ENCODE measurements at regions of chr5 and their contacts with region 1.

Region 1: DNA sequence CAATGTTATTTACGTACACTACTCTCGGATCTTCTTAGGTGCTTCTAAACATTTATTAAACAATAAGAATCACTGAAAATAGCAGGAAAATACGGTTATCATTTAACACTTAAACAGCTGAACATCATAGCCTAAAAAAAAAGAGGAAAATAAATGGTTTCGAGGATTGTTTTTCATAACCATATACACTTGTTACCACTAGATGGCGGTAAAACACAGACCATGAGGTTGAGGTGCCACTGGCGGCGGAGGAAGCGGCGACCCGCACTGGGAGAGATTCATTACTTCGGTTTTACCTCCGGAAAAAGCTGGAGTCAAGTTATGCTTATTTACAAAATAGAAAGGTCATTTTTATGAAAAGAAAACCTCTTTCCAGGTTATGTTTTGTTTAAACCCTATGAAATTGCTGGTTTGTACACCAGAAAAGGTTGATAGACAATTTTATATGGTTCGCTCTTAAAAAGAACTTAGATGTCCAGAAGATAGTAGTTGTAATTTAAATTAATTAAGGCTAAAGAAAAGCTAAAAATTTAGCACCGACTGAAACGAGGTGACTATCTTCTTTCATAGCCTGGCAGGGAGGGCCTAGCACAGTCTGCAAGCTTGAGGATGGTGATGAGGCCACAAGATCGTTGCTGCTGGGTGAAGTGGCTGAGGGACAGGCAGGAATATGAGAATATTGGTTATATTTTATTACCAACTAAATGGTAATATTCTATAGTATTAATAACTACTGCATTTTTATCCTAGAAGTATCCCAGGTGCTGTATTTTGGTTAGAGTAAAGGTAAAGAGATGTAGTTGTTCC is 605.7 kb downstream of the RAB3C start:
- DNase-seq: peak; percentile 74
- H3K4me3 ChIP-seq: no peak overlapping the region
- H3K27ac ChIP-seq: peak overlapping the region; percentile 24
- H3K27me3 ChIP-seq: no peaks in the 10 kb centered on the region
- CTCF ChIP-seq: peak; percentile 62

Region 2: DNA sequence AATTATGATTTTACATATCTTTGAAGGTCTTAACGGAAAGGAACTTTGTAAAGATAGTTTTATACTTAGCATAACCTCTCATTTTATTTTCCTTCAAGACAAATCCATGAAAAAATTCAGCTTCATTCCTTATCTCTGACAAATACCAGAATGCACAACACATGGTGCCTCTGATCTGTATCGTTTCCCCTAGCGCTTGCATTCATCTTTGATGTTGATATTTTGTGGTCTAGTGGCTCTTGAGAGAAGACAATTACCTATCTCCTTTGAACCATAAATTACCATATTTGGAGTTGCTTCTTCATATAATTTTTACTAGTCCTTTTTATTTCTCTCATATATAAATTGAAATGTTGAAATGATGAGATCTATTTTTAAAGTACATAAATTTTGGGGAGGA is 153.6 kb after region 1 on chr5:
- in situ Hi-C with region 1: no loop called
- DNase-seq: peak; percentile 42
- H3K4me3 ChIP-seq: no peak overlapping the region
- H3K27ac ChIP-seq: no peak overlapping the region
- H3K27me3 ChIP-seq: no peaks in the 10 kb centered on the region
- CTCF ChIP-seq: no peak

Region 3: DNA sequence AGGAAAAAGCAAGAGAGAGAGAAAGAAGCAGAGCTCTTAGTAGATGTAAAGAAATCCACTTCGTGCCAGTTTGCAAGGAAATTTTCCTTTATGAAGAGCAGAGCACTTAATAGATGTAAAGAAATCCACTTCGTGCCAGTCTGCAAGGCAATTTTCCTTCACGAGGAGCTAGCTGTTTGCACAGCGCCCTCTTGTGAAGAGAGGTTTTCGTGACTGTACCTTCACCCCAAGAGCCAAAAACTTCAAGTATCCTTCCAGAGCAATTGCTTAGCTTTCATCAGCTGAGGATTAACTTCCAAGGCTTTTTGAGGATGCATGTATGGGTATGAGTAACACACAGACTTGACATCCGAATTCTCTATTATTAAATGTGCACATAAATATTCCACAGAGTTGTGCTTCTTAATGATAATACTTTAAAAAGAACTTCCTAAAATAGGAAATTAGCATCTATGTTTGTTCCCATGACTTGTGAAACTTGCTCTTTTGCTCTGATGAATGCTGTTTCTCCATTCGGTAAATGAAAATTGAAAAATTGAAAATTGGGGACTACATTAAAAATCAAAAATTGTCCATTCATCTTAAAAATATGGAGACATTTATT is 179.3 kb after region 1 on chr5:
- in situ Hi-C with region 1: loop called (anchors 25 kb)
- DNase-seq: peak; percentile 66
- H3K4me3 ChIP-seq: no peak overlapping the region
- H3K27ac ChIP-seq: no peak overlapping the region
- H3K27me3 ChIP-seq: no peaks in the 10 kb centered on the region
- CTCF ChIP-seq: peak; percentile 91

Region 4: GRCh38 chr5:59542851-59543820 is 354.5 kb after region 1 on chr5:
- in situ Hi-C with region 1: no loop called
- DNase-seq: peak; percentile 22
- H3K4me3 ChIP-seq: no peak overlapping the region
- H3K27ac ChIP-seq: no peak overlapping the region
- H3K27me3 ChIP-seq: no peaks in the 10 kb centered on the region
- CTCF ChIP-seq: no peak